ENCODE measurements at regions of chr2 and their contacts with region 1.

Region 1: DNA sequence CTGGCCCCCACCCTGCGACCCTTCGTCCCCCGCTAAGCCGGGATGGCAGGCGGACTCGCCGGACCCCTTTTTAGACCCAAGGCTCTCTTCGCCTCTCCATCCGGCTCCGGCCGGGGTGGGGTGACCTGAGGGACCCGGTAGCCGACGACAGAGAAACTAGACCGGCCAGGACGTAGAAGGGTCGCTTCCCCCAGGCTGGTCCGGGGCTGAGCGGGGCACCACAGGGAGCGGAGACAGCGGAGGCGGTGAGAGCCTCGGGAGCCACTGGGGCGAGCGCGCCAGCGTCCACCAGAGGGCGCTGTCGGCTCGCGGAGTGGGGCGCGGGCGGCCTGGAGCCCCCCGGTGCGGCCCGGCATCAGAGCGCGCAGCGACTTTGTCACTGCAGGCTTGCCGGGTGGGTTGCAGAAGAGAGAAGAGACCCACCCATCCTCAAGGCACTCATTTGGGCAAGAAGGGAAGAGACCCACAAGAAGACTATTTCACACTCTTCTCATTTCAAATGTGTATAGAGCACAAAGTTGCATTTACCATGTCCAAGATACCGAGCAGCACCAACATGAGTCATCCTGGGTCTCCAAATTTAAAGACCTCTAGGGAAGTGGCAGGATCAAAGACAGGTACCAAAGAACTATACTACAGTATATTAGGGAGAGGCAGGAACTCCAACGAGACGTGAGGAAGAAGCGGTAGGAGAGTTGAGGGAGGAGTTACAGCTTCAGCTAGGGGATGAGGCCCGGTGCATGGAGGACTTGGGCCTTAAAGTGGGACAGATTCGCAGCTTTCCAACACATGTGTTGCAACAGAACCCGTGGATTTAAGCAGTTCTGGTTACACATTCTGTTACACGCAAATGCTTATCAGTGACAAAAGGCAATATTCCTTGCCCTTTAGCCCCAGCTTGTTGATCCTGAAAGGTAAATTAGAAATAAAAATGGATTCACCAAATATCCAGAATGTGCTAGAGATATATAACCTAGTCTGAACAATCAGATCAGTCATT is 7.6 kb upstream of the PRKCE start:
- DNase-seq: no peak
- H3K4me3 ChIP-seq: peak overlapping the region; percentile 61
- H3K27ac ChIP-seq: no peak overlapping the region
- H3K27me3 ChIP-seq: no peaks in the 10 kb centered on the region
- CTCF ChIP-seq: peak; percentile 63

Region 2: DNA sequence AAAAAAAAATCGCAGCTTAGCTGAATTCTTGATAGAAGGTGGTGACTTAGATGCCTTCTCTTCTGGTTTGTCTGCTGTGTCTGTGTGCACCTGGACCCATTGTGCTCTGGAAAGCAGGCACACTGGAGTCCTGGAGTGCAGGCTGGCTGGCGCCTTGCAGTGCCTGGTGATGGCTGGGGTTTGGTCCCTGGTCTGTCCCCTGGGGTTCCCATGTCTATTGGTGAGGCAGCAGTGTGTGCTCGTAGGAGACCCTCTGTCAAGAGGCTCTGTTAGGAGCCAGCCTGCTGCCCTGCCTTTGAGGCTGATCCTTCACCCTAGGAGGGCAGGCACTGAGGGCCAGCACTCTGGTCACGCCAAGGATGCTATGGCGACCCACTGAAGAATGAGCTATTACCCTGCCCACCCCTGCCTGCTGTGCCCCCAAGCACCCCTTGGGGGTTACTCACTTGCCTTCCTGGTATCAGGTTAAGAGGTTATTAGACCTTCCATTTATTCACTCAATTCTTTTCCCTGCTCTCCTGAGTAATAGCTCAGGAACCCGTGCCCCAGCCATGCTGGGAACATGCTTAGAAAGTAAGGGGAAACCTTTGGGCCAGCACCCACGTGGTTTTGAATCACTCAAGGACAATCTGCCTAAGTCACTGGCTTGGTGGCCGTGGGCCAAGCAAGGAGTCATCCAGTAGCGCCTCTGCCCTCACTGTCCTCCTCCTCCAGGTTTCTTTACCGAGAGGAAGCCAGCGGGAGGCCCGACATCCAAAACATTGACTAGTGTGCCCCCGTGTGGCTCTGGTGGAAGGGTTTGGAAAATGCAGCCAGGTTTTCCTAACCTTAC is 292.2 kb after region 1 on chr2:
- in situ Hi-C with region 1: loop called (anchors 25 kb)
- DNase-seq: peak; percentile 98
- H3K4me3 ChIP-seq: no peak overlapping the region
- H3K27ac ChIP-seq: no peak overlapping the region
- H3K27me3 ChIP-seq: no peaks in the 10 kb centered on the region
- CTCF ChIP-seq: peak; percentile 85

Measured in brain microvascular endothelial cell (primary cell).